ENCODE measurements at regions of chr17 and their contacts with region 1.

Region 1: DNA sequence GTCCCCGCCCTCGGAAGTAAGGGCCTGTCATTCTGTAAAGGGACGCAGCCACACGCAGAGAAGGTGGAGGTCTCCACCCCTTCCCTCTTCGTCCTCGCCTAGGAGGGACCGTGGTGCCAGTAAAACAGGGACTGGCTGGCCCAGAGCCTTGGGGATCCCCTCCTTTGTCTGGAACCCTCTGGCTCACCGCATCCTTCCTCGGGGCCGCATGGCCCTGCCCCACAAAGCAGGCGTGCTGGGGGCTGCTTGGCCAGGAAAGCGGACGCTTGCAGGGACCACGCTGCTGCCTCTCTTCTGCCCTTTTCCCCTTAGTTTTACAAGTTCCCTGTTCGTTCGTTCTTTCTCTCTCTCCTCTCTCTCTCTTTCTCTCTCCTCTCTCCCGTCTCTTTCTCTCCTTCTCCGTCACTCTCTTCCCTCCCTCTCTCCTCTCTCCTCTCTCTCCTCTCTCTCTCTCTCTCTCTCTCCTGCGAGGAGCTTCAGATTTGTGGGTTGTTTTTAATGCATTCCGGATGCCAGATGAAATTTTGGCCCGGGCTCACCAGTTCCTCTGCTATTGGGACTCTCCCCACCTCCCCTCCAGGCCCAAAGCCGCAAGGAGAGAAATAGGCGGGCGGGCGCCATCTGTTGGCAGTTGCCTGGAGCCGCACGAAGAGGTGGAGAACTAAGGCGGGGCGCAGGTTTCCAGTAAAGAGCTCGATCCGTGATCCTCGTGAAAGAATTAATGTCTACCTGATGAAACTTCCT is 35.1 kb upstream of the CDRT4 start:
- DNase-seq: peak; percentile 82 to 86
- ATAC-seq: peak; percentile 83
- H3K4me3 ChIP-seq: peak overlapping the region; percentile 12 to 42 (median 34)
- H3K27ac ChIP-seq: peak overlapping the region; percentile 51 to 68 (median 62)
- H3K4me1 ChIP-seq: peaks cover 8 to 14% of the 10 kb centered on the region in 2 donors
- H3K27me3 ChIP-seq: no peaks in the 10 kb centered on the region
- CTCF ChIP-seq: peak; percentile 87 to 93 (median 90)
- POLR2A ChIP-seq: peak in 1 of 2 donors; percentile 4

Region 2: GRCh38 chr17:15257258-15257788 is 245.2 kb before region 1 on chr17:
- in situ Hi-C with region 1: loop called (anchors 5 kb)
- intact Hi-C with region 1: loop called (anchors 1 kb)
- DNase-seq: peak; percentile 71 to 86
- ATAC-seq: peak; percentile 16 to 40
- H3K4me3 ChIP-seq: peak overlapping the region; percentile 26 to 97 (median 62)
- H3K27ac ChIP-seq: peak overlapping the region; percentile 94 to 98 (median 96)
- H3K4me1 ChIP-seq: peaks cover 43 to 71% of the 10 kb centered on the region in 2 donors
- H3K27me3 ChIP-seq: no peaks in the 10 kb centered on the region
- CTCF ChIP-seq: peak; percentile 63 to 94 (median 92)
- POLR2A ChIP-seq: peak in 1 of 2 donors; percentile 34

Region 3: GRCh38 chr17:15273141-15273793 is 229.3 kb before region 1 on chr17:
- in situ Hi-C with region 1: no loop called
- intact Hi-C with region 1: no loop called
- DNase-seq: peak in 1 of 2 donors; percentile 34
- ATAC-seq: peak; percentile 78 to 82
- H3K4me3 ChIP-seq: no peak overlapping the region
- H3K27ac ChIP-seq: peak overlapping the region; percentile 49 to 63 (median 56)
- H3K4me1 ChIP-seq: peaks cover 12 to 13% of the 10 kb centered on the region in 2 donors
- H3K27me3 ChIP-seq: no peaks in the 10 kb centered on the region
- CTCF ChIP-seq: no peak
- POLR2A ChIP-seq: no peak

Region 4: GRCh38 chr17:15351925-15352324 is 150.6 kb before region 1 on chr17:
- in situ Hi-C with region 1: no loop called
- intact Hi-C with region 1: loop called (anchors 5 kb)
- DNase-seq: peak; percentile 53 to 70
- ATAC-seq: peak; percentile 100
- H3K4me3 ChIP-seq: no peak overlapping the region
- H3K27ac ChIP-seq: peak overlapping the region; percentile 45 to 61 (median 58)
- H3K4me1 ChIP-seq: peaks cover 0 to 15% of the 10 kb centered on the region in 2 donors
- H3K27me3 ChIP-seq: no peaks in the 10 kb centered on the region
- CTCF ChIP-seq: no peak
- POLR2A ChIP-seq: no peak

Region 5: DNA sequence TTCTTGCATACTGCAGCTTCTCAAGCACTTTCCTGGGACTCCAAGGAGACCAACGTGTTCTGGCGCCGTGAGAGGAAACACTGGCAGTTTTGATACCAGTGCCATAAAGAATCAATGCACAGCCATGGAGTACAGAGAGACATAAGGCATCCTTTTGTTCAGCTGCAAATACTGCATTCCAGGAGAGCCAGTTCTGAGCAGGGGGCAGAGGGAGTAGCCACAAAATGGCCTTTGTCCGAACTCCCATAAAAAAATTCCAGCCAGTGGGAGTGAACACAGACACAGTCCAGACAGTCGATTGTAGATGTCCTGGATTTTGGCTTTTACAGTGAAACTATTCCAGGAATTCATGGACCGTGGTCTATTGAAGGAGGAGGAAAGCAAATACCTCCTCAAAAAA is 124.9 kb before region 1 on chr17:
- in situ Hi-C with region 1: loop called in 1 of 4 experiments (anchors 25 kb)
- intact Hi-C with region 1: no loop called
- DNase-seq: no peak
- ATAC-seq: no peak
- H3K4me3 ChIP-seq: no peak overlapping the region
- H3K27ac ChIP-seq: no peak overlapping the region
- H3K4me1 ChIP-seq: no peaks in the 10 kb centered on the region
- H3K27me3 ChIP-seq: no peaks in the 10 kb centered on the region
- CTCF ChIP-seq: no peak
- POLR2A ChIP-seq: no peak

Region 6: DNA sequence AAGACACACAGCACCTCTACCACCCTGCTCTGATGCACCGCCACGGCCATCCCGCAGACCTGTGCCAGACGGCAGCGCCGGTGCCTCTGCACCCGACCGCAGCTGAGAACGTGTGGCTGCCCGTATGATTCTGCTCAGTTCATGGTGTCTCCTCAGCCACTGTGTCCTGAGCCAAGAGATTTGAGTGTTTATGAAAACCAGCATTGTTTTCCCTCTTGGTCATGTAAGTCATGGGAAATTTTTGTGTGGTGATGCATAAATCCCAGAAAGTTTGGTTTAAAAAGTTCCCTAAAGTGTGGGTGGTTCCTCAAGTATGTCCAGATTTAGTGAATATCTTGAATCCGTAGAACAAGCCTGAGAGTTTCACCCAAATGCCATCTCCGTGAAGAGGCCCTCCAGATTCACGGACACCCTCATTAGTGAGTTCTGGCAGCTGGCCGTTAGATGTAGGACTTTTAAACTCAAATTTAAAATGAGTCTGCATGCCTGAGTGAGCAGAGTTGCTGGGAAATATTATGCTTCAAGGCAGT is 92.8 kb before region 1 on chr17:
- in situ Hi-C with region 1: loop called in 2 of 4 experiments (anchors 5 to 10 kb)
- intact Hi-C with region 1: loop called (anchors 2 kb)
- DNase-seq: peak; percentile 38 to 46
- ATAC-seq: peak; percentile 32 to 47
- H3K4me3 ChIP-seq: peak overlapping the region in 1 of 4 donors; percentile 18
- H3K27ac ChIP-seq: peak overlapping the region; percentile 70 to 89 (median 78)
- H3K4me1 ChIP-seq: peaks cover 14 to 27% of the 10 kb centered on the region in 2 donors
- H3K27me3 ChIP-seq: no peaks in the 10 kb centered on the region
- CTCF ChIP-seq: no peak
- POLR2A ChIP-seq: peak in 1 of 2 donors; percentile 42

Region 7: DNA sequence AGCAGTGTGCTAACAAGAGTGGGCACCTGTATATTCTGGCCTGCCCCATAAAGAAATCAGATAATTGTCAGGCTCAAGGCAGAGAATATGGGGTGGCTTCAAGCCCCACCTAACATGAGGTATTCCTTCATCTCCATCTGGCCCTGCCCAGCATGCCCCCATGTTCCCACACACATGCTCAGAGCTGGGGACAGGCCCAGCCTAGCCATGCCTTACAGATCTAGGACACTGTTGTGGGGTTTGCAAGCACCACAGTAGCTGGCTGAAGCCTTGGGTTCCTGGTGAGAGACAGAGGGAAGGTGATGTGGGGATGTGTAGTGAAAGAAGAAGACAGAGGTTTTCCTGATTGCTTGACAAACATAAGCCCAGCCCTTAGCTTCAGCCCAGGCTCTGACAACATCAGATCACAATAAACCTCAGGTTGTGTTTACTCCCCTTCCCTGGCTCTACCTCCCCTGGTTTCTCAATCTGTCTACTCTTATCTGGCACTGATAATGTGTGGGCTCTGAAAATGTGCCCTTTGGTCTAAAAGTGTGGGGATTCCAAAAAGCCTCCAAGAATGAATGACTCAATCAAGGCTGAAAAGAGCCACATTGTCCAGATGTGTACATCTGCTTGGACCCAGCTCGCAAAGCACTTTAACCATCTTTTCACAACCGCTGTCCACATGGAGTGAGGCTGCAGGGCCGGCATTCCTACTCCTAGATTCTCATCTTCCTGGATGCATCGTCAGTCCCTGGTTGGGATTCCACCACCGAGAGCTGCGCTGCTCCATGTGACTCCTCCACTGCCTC is 69.5 kb before region 1 on chr17:
- in situ Hi-C with region 1: no loop called
- intact Hi-C with region 1: loop called (anchors 5 kb)
- DNase-seq: peak in 1 of 2 donors; percentile 37
- ATAC-seq: no peak
- H3K4me3 ChIP-seq: no peak overlapping the region
- H3K27ac ChIP-seq: peak overlapping the region; percentile 86 to 94 (median 89)
- H3K4me1 ChIP-seq: peaks cover 62 to 67% of the 10 kb centered on the region in 2 donors
- H3K27me3 ChIP-seq: no peaks in the 10 kb centered on the region
- CTCF ChIP-seq: no peak
- POLR2A ChIP-seq: no peak

Region 8: DNA sequence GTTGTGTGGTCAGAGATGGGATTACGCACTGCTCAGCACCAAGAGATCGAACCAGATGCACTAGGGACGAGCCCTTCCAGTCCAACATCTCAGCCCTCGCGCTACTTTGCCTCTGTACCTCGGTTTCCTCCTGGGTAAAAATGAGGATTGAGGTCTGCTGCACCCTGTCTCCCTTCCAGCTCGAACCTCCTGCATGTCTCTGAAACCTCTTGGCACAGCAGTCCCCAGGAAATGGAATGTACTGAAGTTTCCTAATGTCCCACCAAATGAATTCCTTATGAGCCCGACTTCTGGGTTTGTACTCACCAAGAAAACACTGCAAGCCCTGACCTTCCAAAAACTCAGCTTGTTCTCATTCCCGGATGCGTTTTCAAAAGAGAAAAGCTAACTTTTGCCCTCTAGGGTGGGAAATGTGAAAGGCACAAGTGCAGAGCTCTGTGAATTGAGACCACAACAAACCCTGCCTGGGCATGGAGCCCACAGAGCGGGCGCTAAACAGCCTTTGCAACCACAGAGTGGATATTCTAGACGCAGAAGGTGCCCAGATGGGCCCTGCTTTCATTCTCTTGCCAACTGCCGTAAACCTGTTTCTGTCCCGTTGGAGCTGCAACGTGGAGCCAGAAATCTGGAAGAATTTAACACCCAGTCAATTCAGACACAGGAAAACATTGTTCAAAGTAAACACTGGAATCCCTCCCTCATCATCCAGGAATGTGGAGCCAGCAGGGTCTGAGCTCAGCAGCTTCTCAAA is 45.4 kb before region 1 on chr17:
- in situ Hi-C with region 1: no loop called
- intact Hi-C with region 1: loop called (anchors 1 kb)
- DNase-seq: peak; percentile 86 to 95
- ATAC-seq: peak; percentile 81 to 82
- H3K4me3 ChIP-seq: peak overlapping the region in 3 of 4 donors; percentile 10 to 26 (median 10)
- H3K27ac ChIP-seq: peak overlapping the region; percentile 90 to 92 (median 90)
- H3K4me1 ChIP-seq: peaks cover 25 to 35% of the 10 kb centered on the region in 2 donors
- H3K27me3 ChIP-seq: no peaks in the 10 kb centered on the region
- CTCF ChIP-seq: peak; percentile 35 to 54 (median 49)
- POLR2A ChIP-seq: no peak

Region 9: DNA sequence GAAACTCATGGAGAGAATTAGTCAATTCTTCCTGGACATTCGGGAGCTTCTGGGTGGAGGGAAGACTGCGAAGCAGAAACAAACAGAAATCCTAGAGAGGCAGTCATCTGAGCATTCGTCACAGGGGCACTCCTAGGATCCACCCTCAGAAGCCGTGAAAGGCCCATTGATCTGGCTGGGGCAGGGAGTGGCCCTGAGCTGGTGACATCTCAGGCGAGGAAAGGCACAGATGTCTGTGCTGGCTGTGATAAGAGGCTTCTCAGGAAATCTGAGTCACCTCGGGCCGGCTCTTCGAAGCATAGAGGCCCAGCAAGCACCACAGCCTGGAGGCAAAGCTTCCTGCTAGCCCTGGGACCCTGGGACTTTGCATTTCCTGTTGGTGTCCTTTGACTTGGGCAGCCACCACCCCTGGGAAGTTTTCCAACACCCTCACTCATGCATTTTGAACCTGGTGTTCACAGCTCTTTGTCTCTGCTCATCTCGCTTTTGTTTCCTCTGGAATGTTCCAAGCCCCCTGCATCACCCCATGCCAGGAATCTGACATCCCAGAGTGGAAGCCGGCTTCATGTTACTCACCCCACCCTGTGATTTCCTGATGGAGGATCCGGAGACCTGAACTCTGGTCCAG is 11.8 kb before region 1 on chr17:
- in situ Hi-C with region 1: no loop called
- intact Hi-C with region 1: no loop called
- DNase-seq: peak; percentile 70 to 80
- ATAC-seq: peak; percentile 79 to 92
- H3K4me3 ChIP-seq: no peak overlapping the region
- H3K27ac ChIP-seq: peak overlapping the region; percentile 63 to 78 (median 71)
- H3K4me1 ChIP-seq: peaks cover 9 to 19% of the 10 kb centered on the region in 2 donors
- H3K27me3 ChIP-seq: no peaks in the 10 kb centered on the region
- CTCF ChIP-seq: no peak
- POLR2A ChIP-seq: no peak